HAP-1 (cell line): ENCODE measurements at regions of chr7 and their contacts with region 1.

Region 1: GRCh38 chr7:4675771-4676367 is 6.2 kb upstream of the FOXK1 start:
- DNase-seq: no peak
- H3K4me3 ChIP-seq: no peak overlapping the region
- H3K4me1 ChIP-seq: no peaks in the 10 kb centered on the region
- H3K27me3 ChIP-seq: no peaks in the 10 kb centered on the region

Region 2: DNA sequence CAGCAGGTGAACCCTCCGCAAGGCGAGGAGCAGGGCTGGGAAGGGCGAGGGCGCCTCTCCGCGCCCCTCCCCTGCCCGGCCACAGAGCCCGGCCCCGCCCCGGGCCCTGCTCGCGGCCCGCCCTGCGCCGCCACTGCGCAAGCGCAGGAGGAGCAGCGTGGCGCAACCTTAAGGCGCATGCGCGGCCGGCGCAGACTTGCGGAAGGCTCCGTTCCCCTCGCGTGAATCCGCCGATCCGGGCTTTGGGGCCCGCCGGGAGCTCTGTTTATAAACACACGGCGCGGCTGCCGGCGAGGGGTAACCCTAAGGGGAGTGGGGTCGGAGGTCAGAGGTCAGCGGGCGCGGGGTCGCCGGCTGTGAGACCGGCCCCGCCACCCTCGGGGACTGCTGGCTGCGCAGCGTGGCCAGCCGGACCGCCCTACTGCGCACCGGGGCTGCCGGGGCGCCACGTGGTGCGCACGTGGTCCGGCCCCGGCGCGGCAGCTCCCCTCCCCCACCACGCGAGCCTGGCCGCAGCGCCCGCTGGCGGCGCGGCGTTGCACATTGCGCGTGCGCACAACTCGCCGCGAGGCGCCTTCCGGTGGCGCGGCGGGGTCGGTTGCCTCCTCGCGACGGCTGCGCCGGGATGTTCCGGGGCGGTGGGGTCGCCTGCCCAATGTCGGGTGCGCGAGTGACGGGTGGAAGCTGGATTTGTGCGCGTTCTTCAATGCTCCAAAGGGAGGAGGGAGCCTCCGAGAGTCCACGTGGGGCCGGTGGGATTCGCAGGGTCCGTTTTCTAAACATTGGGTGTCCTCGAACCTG is 34.0 kb before region 1 on chr7:
- in situ Hi-C with region 1: loop called (anchors 5 kb)
- DNase-seq: peak; percentile 88 to 95
- H3K4me3 ChIP-seq: peak overlapping the region; percentile 52
- H3K4me1 ChIP-seq: peaks cover 9% of the 10 kb centered on the region; the same call in 1 of the 2 replicates
- H3K27me3 ChIP-seq: no peaks in the 10 kb centered on the region